MCF 10A (cell line): ENCODE measurements at regions of chr1 and their contacts with region 1.

Region 1: GRCh38 chr1:23743287-23744052 is at the start of gene ELOA:
- DNase-seq: peak; percentile 58
- H3K4me3 Mint-ChIP-seq: peak within 1 kb of the TSS; percentile 83
- H3K27ac Mint-ChIP-seq: peak within 1 kb of the TSS; percentile 86
- H3K4me1 Mint-ChIP-seq: peaks cover 35% of the 10 kb centered on the region
- H3K27me3 Mint-ChIP-seq: no peaks in the 10 kb centered on the region
- CTCF ChIP-seq: no peak
- total RNA-seq, gene ELOA: 68.3 and 69.1 TPM in 2 replicates

Region 2: GRCh38 chr1:23484253-23485001 is 259.0 kb before region 1 on chr1:
- CTCF ChIA-PET with region 1: no interaction called
- POLR2A ChIA-PET with region 1: no interaction called
- intact Hi-C with region 1: no loop called
- DNase-seq: peak; percentile 90
- H3K4me3 Mint-ChIP-seq: peak overlapping the region; percentile 76
- H3K27ac Mint-ChIP-seq: no peak overlapping the region
- H3K4me1 Mint-ChIP-seq: peaks cover 15% of the 10 kb centered on the region
- H3K27me3 Mint-ChIP-seq: no peaks in the 10 kb centered on the region
- CTCF ChIP-seq: no peak

Region 3: GRCh38 chr1:23691499-23692307 is 51.8 kb before region 1 on chr1 and contains the start of gene RPL11:
- CTCF ChIA-PET with region 1: no interaction called
- POLR2A ChIA-PET with region 1: interaction called, 95 read pairs
- intact Hi-C with region 1: loop called (anchors 2 kb)
- DNase-seq: peak; percentile 96
- H3K4me3 Mint-ChIP-seq: peak within 1 kb of the TSS; percentile 88
- H3K27ac Mint-ChIP-seq: peak within 1 kb of the TSS; percentile 97
- H3K4me1 Mint-ChIP-seq: peaks cover 35% of the 10 kb centered on the region
- H3K27me3 Mint-ChIP-seq: no peaks in the 10 kb centered on the region
- CTCF ChIP-seq: peak; percentile 44
- total RNA-seq, gene RPL11: 1,201 and 1,563 TPM in 2 replicates

Region 4: DNA sequence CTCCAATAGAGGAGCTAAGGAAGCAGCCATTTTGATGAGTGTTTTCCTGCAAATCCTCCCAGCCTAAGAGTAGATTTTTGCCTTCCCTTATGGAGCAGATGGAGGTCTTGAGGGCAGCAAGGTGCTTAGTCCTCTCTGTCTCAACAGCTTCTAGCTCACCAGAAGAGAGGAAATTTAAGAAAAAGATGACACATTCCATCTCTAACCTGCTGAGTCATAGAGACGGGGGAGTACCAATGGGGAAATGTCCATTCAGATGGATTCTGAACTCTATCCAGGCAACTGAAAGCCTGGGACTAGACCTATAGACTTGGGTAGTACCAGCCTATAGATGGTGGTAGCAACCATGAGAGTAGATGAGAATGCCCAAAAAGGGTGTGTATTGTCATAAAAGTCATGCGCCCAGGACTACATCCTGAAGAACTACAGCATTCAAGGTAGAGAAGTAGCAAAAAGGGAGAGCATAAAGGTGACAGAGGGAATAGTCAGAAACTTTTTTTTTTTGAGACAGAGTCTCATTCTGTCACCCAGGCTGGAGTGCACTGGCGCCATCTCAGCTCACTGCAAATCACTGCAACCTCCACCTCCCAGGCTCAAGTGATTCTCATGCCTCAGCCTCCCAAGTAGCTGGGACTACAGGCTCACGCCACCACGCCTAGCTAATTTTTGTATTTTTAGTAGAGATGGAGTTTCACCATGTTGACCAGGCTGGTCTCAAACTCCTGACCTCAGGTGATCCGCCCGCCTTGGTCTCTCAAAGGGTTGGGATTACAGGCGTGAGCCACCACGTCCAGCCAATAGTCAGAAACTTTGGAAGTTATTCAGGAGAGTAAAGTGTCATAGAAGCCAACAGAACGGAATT is 10.9 kb before region 1 on chr1:
- CTCF ChIA-PET with region 1: interaction called, 5 read pairs
- POLR2A ChIA-PET with region 1: interaction called, 13 read pairs
- intact Hi-C with region 1: no loop called
- DNase-seq: peak; percentile 52
- H3K4me3 Mint-ChIP-seq: no peak overlapping the region
- H3K27ac Mint-ChIP-seq: no peak overlapping the region
- H3K4me1 Mint-ChIP-seq: peaks cover 24% of the 10 kb centered on the region
- H3K27me3 Mint-ChIP-seq: no peaks in the 10 kb centered on the region
- CTCF ChIP-seq: no peak

Region 5: GRCh38 chr1:23777979-23778814 is 34.7 kb after region 1 on chr1 and contains the start of gene PITHD1:
- CTCF ChIA-PET with region 1: interaction called, 4 read pairs
- POLR2A ChIA-PET with region 1: interaction called, 34 read pairs
- intact Hi-C with region 1: no loop called
- DNase-seq: peak; percentile 84
- H3K4me3 Mint-ChIP-seq: peak within 1 kb of the TSS; percentile 88
- H3K27ac Mint-ChIP-seq: peak within 1 kb of the TSS; percentile 96
- H3K4me1 Mint-ChIP-seq: peaks cover 12% of the 10 kb centered on the region
- H3K27me3 Mint-ChIP-seq: no peaks in the 10 kb centered on the region
- CTCF ChIP-seq: no peak
- total RNA-seq, gene PITHD1: 37.7 and 37.8 TPM in 2 replicates

Region 6: GRCh38 chr1:23854568-23854967 is 111.1 kb after region 1 on chr1:
- CTCF ChIA-PET with region 1: no interaction called
- POLR2A ChIA-PET with region 1: no interaction called
- intact Hi-C with region 1: no loop called
- DNase-seq: peak; percentile 29
- H3K4me3 Mint-ChIP-seq: no peak overlapping the region
- H3K27ac Mint-ChIP-seq: no peak overlapping the region
- H3K4me1 Mint-ChIP-seq: no peaks in the 10 kb centered on the region
- H3K27me3 Mint-ChIP-seq: no peaks in the 10 kb centered on the region
- CTCF ChIP-seq: peak; percentile 16

Region 7: DNA sequence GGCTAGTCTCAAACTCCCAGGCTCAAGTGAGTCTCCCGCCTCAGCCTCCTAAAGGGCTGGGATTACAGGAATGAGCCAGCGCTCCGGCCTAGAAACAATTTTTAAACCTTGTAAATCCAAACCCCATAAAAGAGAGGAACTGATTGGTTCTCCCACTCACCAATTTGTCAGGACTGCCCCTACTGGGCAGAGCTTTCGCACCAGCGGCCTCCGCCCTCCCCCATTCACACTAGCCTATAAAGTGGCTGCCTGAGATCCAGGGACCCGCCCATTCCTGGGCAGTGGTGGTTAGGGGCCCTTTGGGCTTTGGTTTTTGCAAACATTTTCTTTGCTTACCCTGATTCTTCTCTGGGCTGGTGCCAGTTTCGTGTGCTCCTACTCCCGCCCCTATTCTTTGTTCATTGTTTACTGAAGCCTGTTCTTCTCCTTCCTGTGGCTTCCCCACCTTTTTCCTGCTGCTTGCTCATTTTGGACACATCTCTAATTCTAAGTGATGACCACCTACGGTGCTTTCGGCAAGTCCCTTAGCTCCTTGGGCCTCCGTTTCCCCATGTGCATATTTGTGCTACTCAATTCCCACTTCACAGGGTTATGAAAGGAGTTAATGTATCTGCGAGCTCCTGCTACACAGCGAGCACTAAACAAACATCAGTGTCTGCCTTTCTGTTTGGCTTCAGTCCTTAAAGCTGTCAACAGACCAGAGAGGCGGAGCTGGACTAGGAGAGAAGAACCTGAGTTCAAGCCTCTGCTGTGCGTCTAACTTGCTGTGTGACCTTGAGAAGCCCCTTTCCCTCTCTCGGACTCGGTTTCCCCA is 962.0 kb after region 1 on chr1:
- CTCF ChIA-PET with region 1: no interaction called
- POLR2A ChIA-PET with region 1: no interaction called
- intact Hi-C with region 1: no loop called
- DNase-seq: peak; percentile 98
- H3K4me3 Mint-ChIP-seq: peak overlapping the region; percentile 43
- H3K27ac Mint-ChIP-seq: peak overlapping the region; percentile 68
- H3K4me1 Mint-ChIP-seq: peaks cover 19% of the 10 kb centered on the region
- H3K27me3 Mint-ChIP-seq: no peaks in the 10 kb centered on the region
- CTCF ChIP-seq: no peak